HCT116 (cell line): ENCODE measurements at regions of chr19 and their contacts with region 1.

Region 1: DNA sequence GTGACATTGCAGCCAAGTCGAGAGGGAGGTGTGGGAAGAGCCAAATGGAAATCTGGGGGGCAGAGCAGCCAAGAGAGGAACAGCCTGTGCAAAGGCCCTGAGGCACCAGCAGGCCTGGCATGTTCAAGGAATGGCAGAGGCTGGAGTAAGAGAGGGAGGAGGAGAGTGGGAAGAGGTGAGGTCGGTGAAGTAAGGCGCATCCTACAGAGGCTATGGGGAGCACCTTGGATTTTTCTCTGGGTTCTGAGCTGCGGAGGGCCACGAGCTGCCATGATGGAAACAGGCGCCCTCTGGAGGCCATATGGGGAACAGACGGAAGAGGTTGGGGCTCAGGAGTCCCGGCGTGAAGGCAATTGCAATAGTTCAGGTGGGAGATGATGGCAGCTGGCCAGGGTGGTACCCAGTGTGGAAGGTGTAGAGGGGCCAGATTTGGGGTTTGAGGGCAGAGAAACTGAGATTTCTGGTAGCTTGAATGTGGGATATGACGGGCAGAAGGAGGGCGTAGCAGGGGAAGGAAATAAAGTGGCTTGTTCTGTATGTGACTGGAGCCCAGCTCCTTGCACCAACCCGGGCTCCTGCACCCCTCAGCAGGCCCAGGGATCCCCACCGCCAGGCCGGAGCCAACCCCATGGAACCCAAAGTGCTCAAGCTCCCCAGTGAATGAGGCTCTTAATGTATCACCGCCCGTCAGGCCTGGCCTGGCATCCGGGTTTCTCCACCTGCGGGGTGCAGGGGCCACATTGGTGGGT is 20.5 kb upstream of the STRN4 start:
- DNase-seq: no peak
- ATAC-seq: peak; percentile 87
- H3K4me3 ChIP-seq: no peak overlapping the region
- H3K27ac ChIP-seq: no peak overlapping the region
- H3K4me1 ChIP-seq: peaks cover 15 to 16% of the 10 kb centered on the region in 2 experiments
- H3K27me3 ChIP-seq: no peaks in the 10 kb centered on the region
- CTCF ChIP-seq: peak; percentile 38 to 98 (median 92); a peak in 5 of 6 replicates
- POLR2A ChIP-seq: no peak
- RAD21 ChIP-seq: peak; percentile 45

Region 2: GRCh38 chr19:46753420-46754155 is 13.2 kb before region 1 on chr19:
- CTCF ChIA-PET with region 1: interaction called, 16 read pairs
- POLR2A ChIA-PET with region 1: no interaction called
- RAD21 ChIA-PET with region 1: no interaction called
- intact Hi-C with region 1: no loop called
- DNase-seq: no peak
- ATAC-seq: peak; percentile 72
- H3K4me3 ChIP-seq: no peak overlapping the region
- H3K27ac ChIP-seq: no peak overlapping the region
- H3K4me1 ChIP-seq: peaks cover 0 to 8% of the 10 kb centered on the region in 2 experiments; a peak in 3 of 4 replicates
- H3K27me3 ChIP-seq: no peaks in the 10 kb centered on the region
- CTCF ChIP-seq: peak; percentile 54 to 80 (median 75); a peak in 5 of 6 replicates
- POLR2A ChIP-seq: no peak
- RAD21 ChIP-seq: peak; percentile 53